HepG2 (cell line): ENCODE measurements at regions of chr2 and their contacts with region 1.

Region 1: DNA sequence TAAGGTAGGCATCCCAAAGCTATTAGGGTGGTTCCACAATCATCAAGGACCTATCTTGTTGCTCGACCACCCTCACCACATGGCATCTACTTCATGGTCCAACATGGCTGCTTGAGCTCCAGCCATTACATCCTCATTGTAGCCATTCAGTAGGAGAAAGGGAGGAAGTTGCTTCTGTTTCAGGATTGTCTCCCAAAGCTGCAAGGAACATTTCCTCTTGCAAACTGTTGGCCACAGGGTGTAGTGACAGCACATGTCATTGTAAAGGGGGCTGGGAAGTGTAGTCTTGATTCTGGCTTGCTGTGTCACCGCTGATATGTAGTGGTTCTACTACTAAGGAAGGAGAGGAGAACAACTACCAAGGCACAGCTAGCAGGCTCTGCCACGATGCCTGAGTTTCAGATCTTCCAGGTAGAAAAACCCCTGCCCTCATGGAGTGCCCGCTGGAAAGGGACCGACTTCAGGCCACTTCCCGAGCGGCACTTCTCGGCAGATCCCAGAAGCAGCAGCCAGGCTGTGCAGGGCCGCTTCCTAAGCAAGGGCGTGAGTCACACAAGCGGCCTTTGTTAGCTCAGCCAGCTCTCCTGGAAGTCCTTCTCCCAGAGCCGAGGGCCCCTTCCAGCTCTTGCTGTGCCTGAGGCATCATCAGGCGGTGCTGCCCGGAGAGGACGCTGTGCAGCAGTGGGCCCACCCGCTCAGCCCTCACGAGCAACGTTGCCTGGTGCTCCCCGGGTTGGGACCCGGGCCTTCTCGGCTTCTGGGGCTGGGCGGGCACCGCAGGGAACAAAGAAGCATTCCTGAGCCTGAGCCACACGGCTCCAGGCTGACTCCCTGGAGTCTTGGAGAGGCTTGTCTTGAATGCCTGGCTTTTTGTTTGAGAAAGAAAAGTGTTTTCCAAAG is 58.2 kb downstream of the HS6ST1 start:
- DNase-seq: peak; percentile 86
- ATAC-seq: peak; percentile 90
- H3K4me3 ChIP-seq: peak overlapping the region; percentile 35 to 61 (median 39); a peak in 5 of 6 replicates
- H3K27ac ChIP-seq: peak overlapping the region; percentile 18
- H3K4me1 ChIP-seq: peaks cover 39% of the 10 kb centered on the region
- H3K27me3 ChIP-seq: no peaks in the 10 kb centered on the region
- CTCF ChIP-seq: peak; percentile 57
- EP300 ChIP-seq: no peak
- POLR2A ChIP-seq: peak in 1 of 2 experiments; percentile 62; a peak in 2 of 4 replicates
- RAD21 ChIP-seq: peak; percentile 74

Region 2: GRCh38 chr2:128062571-128062970 is 197.9 kb before region 1 on chr2:
- CTCF ChIA-PET with region 1: no interaction called
- POLR2A ChIA-PET with region 1: no interaction called
- in situ Hi-C with region 1: no loop called
- intact Hi-C with region 1: loop called (anchors 1 kb)
- DNase-seq: no peak
- ATAC-seq: no peak
- H3K4me3 ChIP-seq: no peak overlapping the region
- H3K27ac ChIP-seq: no peak overlapping the region
- H3K4me1 ChIP-seq: peaks cover 50% of the 10 kb centered on the region
- H3K27me3 ChIP-seq: no peaks in the 10 kb centered on the region; a peak in 1 of 5 replicates
- CTCF ChIP-seq: no peak
- EP300 ChIP-seq: no peak
- POLR2A ChIP-seq: no peak
- RAD21 ChIP-seq: no peak